Right ventricle myocardium inferior (tissue), 1 donor: ENCODE measurements at regions of chr9 and their contacts with region 1.

Region 1: DNA sequence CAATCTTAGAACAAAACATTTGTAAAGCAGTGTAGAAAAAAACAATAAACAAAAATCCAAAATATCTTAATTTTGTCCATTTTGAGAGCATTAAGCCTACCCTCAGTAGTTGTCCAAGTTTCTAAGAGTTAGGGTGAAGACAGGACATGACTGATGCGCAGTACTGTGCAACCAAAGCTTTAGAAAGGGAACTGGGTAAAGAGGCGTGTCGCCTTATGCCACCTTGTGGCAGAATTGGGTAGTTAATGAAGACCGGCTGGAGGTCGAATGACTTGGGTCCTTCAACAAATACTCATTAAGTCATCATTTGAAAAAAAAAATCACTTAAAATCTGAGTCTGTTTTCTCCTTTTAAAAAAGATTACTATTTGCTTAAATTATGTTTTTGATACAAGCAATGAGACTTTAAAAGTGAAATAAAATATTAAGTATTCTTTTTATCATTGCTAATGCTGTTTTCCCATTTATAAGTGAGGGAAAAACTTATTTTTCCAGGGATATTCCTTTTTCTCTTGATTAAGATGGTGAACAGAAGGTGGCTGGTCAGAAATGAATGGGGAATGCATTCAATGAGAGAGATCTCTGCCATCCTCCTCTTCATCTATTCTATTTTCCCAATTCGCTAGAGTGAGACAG is 3.5 kb upstream of the RNF20 start:
- DNase-seq: no peak
- ATAC-seq: peak; percentile 49

Region 2: DNA sequence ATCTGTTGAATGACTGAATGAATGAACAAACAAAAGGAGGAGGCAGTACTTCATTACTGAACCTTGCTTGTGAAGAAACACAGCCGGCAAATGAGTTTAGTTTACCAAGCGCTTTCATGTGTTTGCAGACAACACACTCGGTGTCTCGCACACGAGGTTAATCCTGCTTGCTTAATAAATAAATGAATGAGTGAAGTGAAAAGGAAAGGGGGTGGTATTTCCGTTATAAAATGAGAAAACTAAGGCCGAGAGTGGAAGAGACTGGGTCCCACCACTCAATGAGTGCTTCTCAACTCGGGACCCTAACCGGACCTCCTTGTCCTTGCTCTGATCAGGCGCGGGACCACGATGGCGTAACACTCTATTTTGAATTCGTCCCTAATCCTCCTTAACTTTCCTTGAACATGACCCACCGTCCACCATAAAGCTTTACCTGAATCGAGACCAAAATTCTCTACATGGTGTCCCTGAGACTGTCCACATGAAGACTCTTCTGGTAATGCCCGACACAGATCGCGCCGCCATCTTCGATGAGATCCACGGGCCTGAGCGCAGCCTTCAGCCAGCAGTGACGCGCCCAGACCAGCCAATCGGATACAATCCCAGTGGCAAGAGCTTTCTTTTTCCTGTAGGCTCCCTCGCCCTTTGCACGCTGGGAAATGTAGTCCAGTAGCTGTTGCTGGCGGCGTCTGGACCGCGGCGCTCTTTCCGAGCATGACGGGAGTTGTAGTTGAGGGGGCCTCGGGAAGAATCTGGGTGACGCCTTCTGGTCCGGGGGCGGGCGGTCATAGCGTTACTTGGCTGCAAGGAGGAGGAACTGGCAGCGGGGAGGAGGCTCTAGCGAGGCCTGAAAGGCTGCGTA is 131.9 kb before region 1 on chr9 and contains the starts of genes MRPL50 and ZNF189:
- intact Hi-C with region 1: loop called (anchors 1 kb)
- DNase-seq: peak; percentile 99
- ATAC-seq: peak; percentile 99
- total RNA-seq, gene MRPL50: 16.5 TPM
- total RNA-seq, gene ZNF189: 15.2 TPM

Region 3: GRCh38 chr9:101465392-101465791 is 64.8 kb before region 1 on chr9:
- intact Hi-C with region 1: loop called (anchors 1 kb)
- DNase-seq: no peak
- ATAC-seq: peak; percentile 77